ENCODE measurements at regions of chr6 and their contacts with region 1.

Region 1: GRCh38 chr6:139375232-139376016 is 976 bp upstream of the CITED2 start:
- DNase-seq: peak; percentile 87 to 95 (median 91)
- H3K4me3 ChIP-seq: peak overlapping the region; percentile 52 to 98
- H3K4me3 Mint-ChIP-seq: peak overlapping the region; percentile 93 to 100 (median 98)
- H3K27ac ChIP-seq: peak overlapping the region; percentile 82
- H3K27ac Mint-ChIP-seq: peak overlapping the region; percentile 96 to 99 (median 96)
- H3K4me1 ChIP-seq: peaks cover 26% of the 10 kb centered on the region
- H3K4me1 Mint-ChIP-seq: peaks cover 18 to 44% (median 26%) of the 10 kb centered on the region in 4 donors
- H3K27me3 ChIP-seq: no peaks in the 10 kb centered on the region
- H3K27me3 Mint-ChIP-seq: no peaks in the 10 kb centered on the region

Region 2: GRCh38 chr6:138987640-138988468 is 387.6 kb before region 1 on chr6 and contains the start of gene REPS1:
- CTCF ChIA-PET with region 1: interaction called, 6 read pairs
- POLR2A ChIA-PET with region 1: interaction called, 10 read pairs
- intact Hi-C with region 1: loop called (anchors 2 kb)
- DNase-seq: peak; percentile 88 to 92 (median 89)
- H3K4me3 ChIP-seq: peak within 1 kb of the TSS; percentile 66 to 89
- H3K4me3 Mint-ChIP-seq: peak within 1 kb of the TSS; percentile 87 to 95 (median 92)
- H3K27ac ChIP-seq: peak within 1 kb of the TSS; percentile 74
- H3K27ac Mint-ChIP-seq: peak within 1 kb of the TSS in 6 of 7 donors; percentile 90 to 96 (median 95)
- H3K4me1 ChIP-seq: peaks cover 47% of the 10 kb centered on the region
- H3K4me1 Mint-ChIP-seq: peaks cover 10 to 18% (median 13%) of the 10 kb centered on the region in 4 donors
- H3K27me3 ChIP-seq: no peaks in the 10 kb centered on the region
- H3K27me3 Mint-ChIP-seq: no peaks in the 10 kb centered on the region
- total RNA-seq, gene REPS1: 61.7 to 69.3 TPM

Region 3: GRCh38 chr6:139124887-139125672 is 250.3 kb before region 1 on chr6:
- CTCF ChIA-PET with region 1: interaction called, 12 read pairs
- POLR2A ChIA-PET with region 1: interaction called, 68 read pairs
- intact Hi-C with region 1: no loop called
- DNase-seq: peak; percentile 85 to 88 (median 86)
- H3K4me3 ChIP-seq: peak overlapping the region in 1 of 2 donors; percentile 34
- H3K4me3 Mint-ChIP-seq: peak overlapping the region; percentile 57 to 80 (median 71)
- H3K27ac ChIP-seq: peak overlapping the region; percentile 55
- H3K27ac Mint-ChIP-seq: peak overlapping the region; percentile 79 to 98 (median 94)
- H3K4me1 ChIP-seq: peaks cover 55% of the 10 kb centered on the region
- H3K4me1 Mint-ChIP-seq: peaks cover 43 to 63% (median 51%) of the 10 kb centered on the region in 4 donors
- H3K27me3 ChIP-seq: no peaks in the 10 kb centered on the region
- H3K27me3 Mint-ChIP-seq: no peaks in the 10 kb centered on the region

Region 4: DNA sequence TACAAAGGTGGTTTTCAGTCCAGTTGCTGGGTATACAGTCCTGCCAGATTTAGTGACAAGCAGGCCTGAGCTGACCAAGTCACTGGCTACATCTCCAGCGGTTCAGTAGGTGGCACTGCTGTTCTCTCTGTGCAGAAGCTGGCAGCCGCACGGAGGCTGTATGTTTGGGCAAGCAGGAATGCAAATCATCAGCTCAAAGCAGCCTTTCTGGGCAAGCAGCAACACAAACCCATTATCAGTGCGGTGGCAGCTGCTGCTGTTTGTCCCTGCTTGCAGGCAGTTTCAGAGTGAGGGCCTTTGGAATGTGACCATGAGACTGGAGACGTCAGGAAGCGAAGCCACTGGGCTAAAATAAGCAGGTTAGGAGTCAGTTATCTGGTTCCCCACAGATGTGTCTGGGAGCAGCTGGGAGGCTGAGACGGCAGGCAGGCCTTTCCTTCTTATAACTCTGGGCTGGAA is 156.1 kb before region 1 on chr6:
- CTCF ChIA-PET with region 1: interaction called, 33 read pairs
- POLR2A ChIA-PET with region 1: interaction called, 45 read pairs
- intact Hi-C with region 1: no loop called
- DNase-seq: peak; percentile 54 to 70 (median 68)
- H3K4me3 ChIP-seq: no peak overlapping the region
- H3K4me3 Mint-ChIP-seq: peak overlapping the region in 6 of 8 donors; percentile 23 to 80 (median 74)
- H3K27ac ChIP-seq: no peak overlapping the region
- H3K27ac Mint-ChIP-seq: peak overlapping the region; percentile 33 to 94 (median 87)
- H3K4me1 ChIP-seq: peaks cover 14% of the 10 kb centered on the region
- H3K4me1 Mint-ChIP-seq: peaks cover 8 to 13% (median 11%) of the 10 kb centered on the region in 4 donors
- H3K27me3 ChIP-seq: no peaks in the 10 kb centered on the region
- H3K27me3 Mint-ChIP-seq: no peaks in the 10 kb centered on the region

Region 5: DNA sequence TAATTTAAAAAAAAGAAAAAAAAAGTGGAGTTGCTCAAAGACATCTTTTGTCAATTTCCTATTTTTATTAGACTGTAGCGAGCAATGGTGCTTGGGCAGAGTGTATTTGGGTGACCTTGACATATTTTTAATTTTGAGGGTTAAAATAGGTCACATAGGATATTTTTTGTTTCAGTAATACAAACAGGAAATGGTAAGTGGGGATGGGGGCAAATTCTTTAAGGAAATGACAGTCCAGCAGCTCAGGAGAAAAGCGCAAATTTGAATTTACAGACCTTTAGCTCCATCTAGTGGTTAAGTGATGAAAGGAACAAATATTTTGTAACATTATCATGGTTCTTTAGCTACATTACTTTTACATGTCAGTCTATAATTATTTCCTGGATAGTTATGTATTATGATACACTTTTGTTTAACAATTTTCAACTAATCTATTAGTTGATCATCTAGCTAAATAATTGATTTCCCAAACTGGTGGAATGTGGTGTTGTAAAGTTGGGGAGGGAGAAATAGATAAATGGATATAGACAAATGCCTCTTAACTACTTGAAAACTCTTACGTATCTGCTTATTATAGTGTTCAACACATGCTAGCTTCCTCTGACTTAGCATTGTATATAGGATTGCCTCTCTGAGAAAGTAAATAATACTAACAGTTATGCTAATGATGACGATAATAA is 11.0 kb before region 1 on chr6:
- CTCF ChIA-PET with region 1: interaction called, 31 read pairs
- POLR2A ChIA-PET with region 1: interaction called, 50 read pairs
- intact Hi-C with region 1: no loop called
- DNase-seq: peak in 4 of 5 donors; percentile 66 to 74 (median 68)
- H3K4me3 ChIP-seq: no peak overlapping the region
- H3K4me3 Mint-ChIP-seq: peak overlapping the region in 7 of 8 donors; percentile 27 to 64 (median 36)
- H3K27ac ChIP-seq: no peak overlapping the region
- H3K27ac Mint-ChIP-seq: peak overlapping the region in 6 of 7 donors; percentile 2 to 82 (median 62)
- H3K4me1 ChIP-seq: peaks cover 20% of the 10 kb centered on the region
- H3K4me1 Mint-ChIP-seq: peaks cover 28 to 45% (median 33%) of the 10 kb centered on the region in 4 donors
- H3K27me3 ChIP-seq: no peaks in the 10 kb centered on the region
- H3K27me3 Mint-ChIP-seq: no peaks in the 10 kb centered on the region

Region 6: GRCh38 chr6:139605350-139605749 is 229.9 kb after region 1 on chr6:
- CTCF ChIA-PET with region 1: no interaction called
- POLR2A ChIA-PET with region 1: no interaction called
- intact Hi-C with region 1: no loop called
- DNase-seq: no peak
- H3K4me3 ChIP-seq: no peak overlapping the region
- H3K4me3 Mint-ChIP-seq: no peak overlapping the region
- H3K27ac ChIP-seq: no peak overlapping the region
- H3K27ac Mint-ChIP-seq: no peak overlapping the region
- H3K4me1 ChIP-seq: no peaks in the 10 kb centered on the region
- H3K4me1 Mint-ChIP-seq: no peaks in the 10 kb centered on the region
- H3K27me3 ChIP-seq: no peaks in the 10 kb centered on the region
- H3K27me3 Mint-ChIP-seq: peaks cover 0 to 2% of the 10 kb centered on the region in 2 donors

Region 7: GRCh38 chr6:139764498-139764986 is 389.1 kb after region 1 on chr6:
- CTCF ChIA-PET with region 1: no interaction called
- POLR2A ChIA-PET with region 1: interaction called, 6 read pairs
- intact Hi-C with region 1: loop called (anchors 10 kb)
- DNase-seq: no peak
- H3K4me3 ChIP-seq: no peak overlapping the region
- H3K4me3 Mint-ChIP-seq: no peak overlapping the region
- H3K27ac ChIP-seq: no peak overlapping the region
- H3K27ac Mint-ChIP-seq: no peak overlapping the region
- H3K4me1 ChIP-seq: no peaks in the 10 kb centered on the region
- H3K4me1 Mint-ChIP-seq: peaks cover 0 to 8% (median 0%) of the 10 kb centered on the region in 4 donors
- H3K27me3 ChIP-seq: no peaks in the 10 kb centered on the region
- H3K27me3 Mint-ChIP-seq: no peaks in the 10 kb centered on the region

Region 8: GRCh38 chr6:140711019-140711613 is 1335.7 kb after region 1 on chr6:
- CTCF ChIA-PET with region 1: no interaction called
- POLR2A ChIA-PET with region 1: no interaction called
- intact Hi-C with region 1: no loop called
- DNase-seq: no peak
- H3K4me3 ChIP-seq: no peak overlapping the region
- H3K4me3 Mint-ChIP-seq: no peak overlapping the region
- H3K27ac ChIP-seq: no peak overlapping the region
- H3K27ac Mint-ChIP-seq: no peak overlapping the region
- H3K4me1 ChIP-seq: no peaks in the 10 kb centered on the region
- H3K4me1 Mint-ChIP-seq: no peaks in the 10 kb centered on the region
- H3K27me3 ChIP-seq: no peaks in the 10 kb centered on the region
- H3K27me3 Mint-ChIP-seq: no peaks in the 10 kb centered on the region